ENCODE measurements at regions of chrX and their contacts with region 1.

Region 1: DNA sequence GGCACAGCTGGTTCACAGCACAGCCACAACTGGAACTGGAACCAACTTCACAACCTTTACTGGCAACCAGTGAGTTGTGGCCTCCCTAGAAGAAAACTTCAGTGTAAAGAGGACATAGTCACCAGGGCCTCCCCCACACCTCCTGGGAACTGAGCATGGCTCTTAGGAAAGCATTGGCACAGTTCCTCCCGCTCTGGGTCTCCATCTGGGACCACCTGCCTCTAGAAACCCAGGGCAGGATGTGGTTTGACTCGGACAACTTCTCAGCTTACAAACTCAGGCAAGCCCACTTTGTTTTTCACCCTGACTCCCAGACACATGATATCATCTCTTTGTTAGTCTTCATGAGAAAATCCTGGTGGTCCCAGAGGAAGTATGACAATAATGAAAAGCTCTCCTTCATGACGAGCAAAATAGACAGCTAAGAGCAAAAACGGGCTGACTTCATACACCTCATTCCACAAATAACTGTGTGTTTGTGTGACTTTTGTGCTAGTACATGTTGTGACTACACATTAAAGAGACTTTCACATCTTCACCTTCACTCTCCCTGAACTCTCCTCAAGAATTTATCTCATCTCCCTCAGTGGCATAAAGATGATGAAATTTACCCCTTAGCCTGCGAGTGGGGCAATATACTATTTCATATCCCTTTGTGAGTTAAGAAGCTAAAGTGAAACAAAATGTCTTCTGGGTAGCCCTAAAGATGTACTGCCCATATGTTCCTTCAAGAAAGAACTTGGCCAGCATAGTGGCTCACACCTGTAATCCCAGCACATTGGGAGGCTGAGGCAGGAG is 75.4 kb downstream of the SH3KBP1 start:
- DNase-seq: peak in 1 of 14 experiments; percentile 15
- ATAC-seq: peak; percentile 24
- H3K4me3 ChIP-seq: no peak overlapping the region
- H3K4me3 Mint-ChIP-seq: no peak overlapping the region
- H3K27ac ChIP-seq: peak overlapping the region in 1 of 2 donors; percentile 40
- H3K27ac Mint-ChIP-seq: peak overlapping the region; percentile 83
- H3K4me1 ChIP-seq: peaks cover 29% of the 10 kb centered on the region
- H3K4me1 Mint-ChIP-seq: peaks cover 65% of the 10 kb centered on the region
- H3K27me3 ChIP-seq: no peaks in the 10 kb centered on the region
- H3K27me3 Mint-ChIP-seq: no peaks in the 10 kb centered on the region
- CTCF ChIP-seq: no peak

Region 2: GRCh38 chrX:19785647-19786046 is 26.4 kb before region 1 on chrX:
- CTCF ChIA-PET with region 1: no interaction called
- POLR2A ChIA-PET with region 1: no interaction called
- intact Hi-C with region 1: no loop called
- DNase-seq: peak in 3 of 14 experiments; percentile 25 to 54 (median 27)
- ATAC-seq: peak; percentile 51
- H3K4me3 ChIP-seq: no peak overlapping the region
- H3K4me3 Mint-ChIP-seq: peak overlapping the region; percentile 54
- H3K27ac ChIP-seq: no peak overlapping the region
- H3K27ac Mint-ChIP-seq: peak overlapping the region; percentile 84
- H3K4me1 ChIP-seq: peaks cover 58% of the 10 kb centered on the region
- H3K4me1 Mint-ChIP-seq: peaks cover 73% of the 10 kb centered on the region
- H3K27me3 ChIP-seq: no peaks in the 10 kb centered on the region
- H3K27me3 Mint-ChIP-seq: no peaks in the 10 kb centered on the region
- CTCF ChIP-seq: no peak

Region 3: GRCh38 chrX:19799319-19800182 is 12.5 kb before region 1 on chrX:
- CTCF ChIA-PET with region 1: no interaction called
- POLR2A ChIA-PET with region 1: interaction called, 14 read pairs
- intact Hi-C with region 1: no loop called
- DNase-seq: peak in 13 of 14 experiments; percentile 21 to 79 (median 48)
- ATAC-seq: peak; percentile 82
- H3K4me3 ChIP-seq: peak overlapping the region; percentile 75
- H3K4me3 Mint-ChIP-seq: peak overlapping the region; percentile 84
- H3K27ac ChIP-seq: peak overlapping the region; percentile 72 to 74
- H3K27ac Mint-ChIP-seq: peak overlapping the region; percentile 90
- H3K4me1 ChIP-seq: peaks cover 64% of the 10 kb centered on the region
- H3K4me1 Mint-ChIP-seq: peaks cover 74% of the 10 kb centered on the region
- H3K27me3 ChIP-seq: no peaks in the 10 kb centered on the region
- H3K27me3 Mint-ChIP-seq: no peaks in the 10 kb centered on the region
- CTCF ChIP-seq: no peak

Region 4: DNA sequence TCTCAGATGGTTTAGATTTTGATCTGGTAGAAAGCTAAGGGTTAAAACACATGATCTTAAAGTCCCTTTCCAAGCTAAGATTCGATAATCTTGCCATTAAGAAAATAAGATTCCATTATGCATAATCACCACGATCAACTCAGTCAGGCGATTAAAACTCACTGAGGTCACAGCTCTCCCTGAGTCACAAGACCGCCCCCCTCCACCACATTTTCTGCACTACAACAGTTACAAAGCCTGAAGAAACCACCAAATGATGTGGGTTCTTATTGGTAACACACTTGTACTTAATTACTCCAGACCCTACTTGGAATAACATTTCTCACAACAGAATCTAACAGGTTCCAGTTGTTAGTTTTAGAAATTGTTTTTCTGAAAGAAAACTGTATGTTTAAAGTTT is 12.6 kb after region 1 on chrX:
- CTCF ChIA-PET with region 1: no interaction called
- POLR2A ChIA-PET with region 1: interaction called, 12 read pairs
- intact Hi-C with region 1: no loop called
- DNase-seq: peak in 4 of 14 experiments; percentile 39 to 56 (median 44)
- ATAC-seq: peak; percentile 71
- H3K4me3 ChIP-seq: no peak overlapping the region
- H3K4me3 Mint-ChIP-seq: no peak overlapping the region
- H3K27ac ChIP-seq: no peak overlapping the region
- H3K27ac Mint-ChIP-seq: peak overlapping the region; percentile 69
- H3K4me1 ChIP-seq: peaks cover 21% of the 10 kb centered on the region
- H3K4me1 Mint-ChIP-seq: peaks cover 46% of the 10 kb centered on the region
- H3K27me3 ChIP-seq: no peaks in the 10 kb centered on the region
- H3K27me3 Mint-ChIP-seq: no peaks in the 10 kb centered on the region
- CTCF ChIP-seq: no peak

Region 5: DNA sequence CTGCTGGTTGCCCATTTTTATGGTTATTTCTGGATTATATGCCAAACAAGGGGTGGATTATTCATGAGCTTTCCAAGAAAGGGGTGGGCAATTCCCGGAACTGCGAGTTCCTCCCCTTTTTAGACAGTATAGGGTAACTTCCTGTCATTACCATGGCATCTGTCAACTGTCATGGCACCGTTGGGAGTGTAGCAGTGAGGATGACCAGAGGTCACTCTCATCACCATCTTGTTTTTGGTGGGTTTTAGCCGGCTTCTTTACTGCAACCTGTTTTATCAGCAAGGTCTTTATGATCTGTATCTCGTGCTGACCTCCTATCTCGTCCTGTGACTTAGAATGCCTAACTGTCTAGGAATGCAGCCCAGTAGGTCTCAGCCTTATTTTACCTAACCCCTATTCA is 17.8 kb after region 1 on chrX:
- CTCF ChIA-PET with region 1: interaction called, 3 read pairs
- POLR2A ChIA-PET with region 1: interaction called, 12 read pairs
- intact Hi-C with region 1: loop called in 1 of 2 experiments (anchors 2 kb)
- DNase-seq: no peak
- ATAC-seq: no peak
- H3K4me3 ChIP-seq: no peak overlapping the region
- H3K4me3 Mint-ChIP-seq: no peak overlapping the region
- H3K27ac ChIP-seq: no peak overlapping the region
- H3K27ac Mint-ChIP-seq: peak overlapping the region; percentile 15
- H3K4me1 ChIP-seq: peaks cover 19% of the 10 kb centered on the region
- H3K4me1 Mint-ChIP-seq: peaks cover 41% of the 10 kb centered on the region
- H3K27me3 ChIP-seq: no peaks in the 10 kb centered on the region
- H3K27me3 Mint-ChIP-seq: no peaks in the 10 kb centered on the region
- CTCF ChIP-seq: no peak

Measured in CD4-positive, alpha-beta T cell (primary cell).